ENCODE measurements at regions of chr15 and their contacts with region 1.

Region 1: DNA sequence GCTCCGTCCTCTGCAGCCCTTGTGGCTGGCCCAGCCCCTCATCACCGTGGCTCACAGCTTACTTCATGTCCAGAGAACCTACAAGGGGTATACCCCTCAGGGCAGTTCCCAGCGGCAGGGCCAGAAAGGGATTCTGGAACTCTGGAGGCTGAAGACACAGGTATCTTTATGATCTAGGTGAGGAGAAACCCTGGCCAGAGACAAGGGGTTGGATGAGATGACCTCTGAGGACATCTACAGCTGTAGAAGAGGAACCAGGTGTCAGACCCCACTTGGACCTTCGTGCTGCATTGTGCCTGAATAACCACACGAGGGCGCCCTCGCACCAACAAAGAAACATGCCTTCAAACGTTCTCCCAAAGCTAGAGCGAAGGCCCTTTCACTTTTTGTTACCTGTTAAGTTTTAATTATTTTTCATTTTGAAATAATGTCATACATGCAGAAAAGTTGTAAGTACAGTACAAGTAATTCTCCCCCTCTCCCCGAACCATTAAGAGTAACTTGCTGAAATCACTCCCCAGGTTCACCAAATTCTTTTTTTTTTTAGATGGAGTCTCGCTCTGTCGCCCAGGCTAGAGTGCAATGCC is 118.7 kb upstream of the SMAD3 start:
- DNase-seq: peak; percentile 49
- ATAC-seq: peak; percentile 77
- H3K4me3 ChIP-seq: no peak overlapping the region
- H3K27ac ChIP-seq: no peak overlapping the region
- H3K4me1 ChIP-seq: peaks cover 6 to 26% of the 10 kb centered on the region in 2 experiments
- H3K27me3 ChIP-seq: no peaks in the 10 kb centered on the region
- CTCF ChIP-seq: peak; percentile 81 to 96 (median 87)
- POLR2A ChIP-seq: no peak
- RAD21 ChIP-seq: peak; percentile 98

Region 2: DNA sequence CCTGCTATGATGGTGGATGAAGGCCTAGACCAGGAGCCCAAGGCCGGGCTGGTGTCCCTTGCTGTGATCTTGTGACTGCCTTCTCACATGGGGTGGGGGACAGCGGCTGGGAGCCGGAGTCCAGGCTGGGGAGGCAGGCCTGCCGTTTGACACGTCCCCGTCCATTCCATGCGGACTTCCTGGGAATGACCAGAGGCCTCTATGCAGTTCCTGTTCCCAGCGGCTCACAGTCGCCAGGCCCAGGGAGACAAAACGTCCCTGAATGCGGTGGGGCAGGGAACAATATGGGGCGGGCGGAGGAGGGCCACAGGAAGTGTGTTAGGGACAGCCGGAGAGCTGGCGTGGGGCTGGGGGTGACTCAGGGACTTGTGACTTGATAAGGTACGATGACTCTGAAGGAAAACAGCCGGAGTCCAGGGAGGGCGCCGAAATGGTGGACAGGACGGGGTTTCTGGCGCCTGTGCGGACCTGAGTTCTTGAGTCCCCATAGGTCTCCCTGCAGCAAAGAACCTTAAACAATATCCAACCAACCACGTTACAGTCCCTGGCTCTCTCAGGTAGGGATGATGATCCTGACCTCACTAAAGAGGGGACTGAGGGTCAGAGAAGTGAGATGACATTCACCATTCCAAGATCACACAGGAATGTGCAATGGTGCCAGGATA is 285.1 kb before region 1 on chr15:
- CTCF ChIA-PET with region 1: no interaction called
- POLR2A ChIA-PET with region 1: no interaction called
- RAD21 ChIA-PET with region 1: no interaction called
- intact Hi-C with region 1: no loop called
- DNase-seq: no peak
- ATAC-seq: no peak
- H3K4me3 ChIP-seq: no peak overlapping the region
- H3K27ac ChIP-seq: no peak overlapping the region
- H3K4me1 ChIP-seq: peaks cover 0 to 7% of the 10 kb centered on the region in 2 experiments; a peak in 2 of 4 replicates
- H3K27me3 ChIP-seq: no peaks in the 10 kb centered on the region
- CTCF ChIP-seq: no peak
- POLR2A ChIP-seq: no peak
- RAD21 ChIP-seq: no peak

Region 3: DNA sequence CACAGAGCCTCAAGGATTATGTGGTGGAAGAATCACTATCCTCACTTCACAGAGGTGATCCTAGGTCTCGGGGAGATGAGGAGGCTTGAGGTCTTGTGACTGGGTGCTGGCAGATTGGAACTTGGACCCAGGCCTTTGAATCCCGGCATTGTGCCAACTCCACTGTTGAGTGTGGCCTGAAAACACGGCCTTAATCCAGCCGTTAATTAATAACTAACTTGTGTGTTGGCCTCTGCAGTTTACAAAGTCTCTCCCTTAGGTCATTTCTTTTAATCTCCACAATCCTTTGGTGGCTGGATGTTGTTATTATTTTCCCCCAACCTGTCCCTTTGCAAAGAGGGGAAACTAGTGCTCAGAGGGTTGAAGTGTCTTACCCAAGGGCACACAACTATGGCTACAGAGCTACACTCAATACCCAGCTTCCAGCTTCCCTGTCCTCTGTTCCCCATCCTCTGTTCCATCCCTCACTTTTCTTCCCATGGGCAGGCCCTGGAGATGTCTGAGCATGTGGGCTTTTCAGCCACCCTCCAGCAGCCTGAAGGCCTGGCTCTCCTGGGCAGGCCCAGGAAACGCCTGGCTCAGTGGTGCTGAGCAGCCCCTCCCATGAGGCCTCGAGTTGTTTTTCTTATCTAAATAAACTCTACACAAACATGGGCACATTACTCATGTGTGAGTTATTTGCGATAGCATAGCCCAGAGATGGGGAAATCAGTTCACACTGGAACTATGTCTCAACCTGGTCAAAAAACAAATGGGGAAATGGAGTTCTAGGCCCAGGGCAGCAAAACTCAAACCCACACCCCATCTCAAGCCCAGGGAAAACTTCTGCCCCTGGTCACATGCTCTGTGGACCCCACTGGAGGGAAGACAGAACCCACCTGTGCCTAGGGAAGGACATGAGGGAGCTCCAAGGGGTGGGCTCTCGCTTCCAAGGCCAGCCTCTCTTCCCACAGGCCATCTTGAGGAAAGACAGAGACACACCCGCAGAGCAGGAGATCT is 101.9 kb after region 1 on chr15:
- CTCF ChIA-PET with region 1: no interaction called
- POLR2A ChIA-PET with region 1: no interaction called
- RAD21 ChIA-PET with region 1: no interaction called
- intact Hi-C with region 1: loop called (anchors 5 kb)
- DNase-seq: no peak
- ATAC-seq: peak; percentile 42
- H3K4me3 ChIP-seq: no peak overlapping the region
- H3K27ac ChIP-seq: peak overlapping the region; percentile 71
- H3K4me1 ChIP-seq: peaks cover 50 to 53% of the 10 kb centered on the region in 2 experiments
- H3K27me3 ChIP-seq: no peaks in the 10 kb centered on the region
- CTCF ChIP-seq: no peak
- POLR2A ChIP-seq: no peak
- RAD21 ChIP-seq: no peak

Region 4: DNA sequence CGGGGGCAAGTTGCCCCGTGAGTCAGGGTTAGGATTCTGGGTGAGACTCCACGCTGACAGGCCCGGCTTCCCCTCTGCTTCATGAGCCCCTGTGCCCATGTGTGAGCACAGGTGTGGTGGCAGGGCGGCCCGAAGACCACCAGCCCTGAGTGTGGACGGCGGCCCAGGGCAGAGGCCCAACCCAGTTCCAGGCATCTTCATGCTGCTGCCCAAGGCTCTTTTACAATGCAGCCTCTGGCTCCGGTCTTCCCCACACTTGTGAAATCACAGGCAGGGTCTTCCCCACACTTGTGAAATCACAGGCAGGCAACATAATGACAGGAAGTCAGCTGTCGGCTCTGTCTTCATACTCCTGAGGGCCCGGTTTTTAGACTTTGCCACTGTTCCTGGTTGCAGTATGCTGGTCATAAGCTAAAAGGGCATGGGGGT is 229.0 kb after region 1 on chr15:
- CTCF ChIA-PET with region 1: interaction called, 3 read pairs
- POLR2A ChIA-PET with region 1: no interaction called
- RAD21 ChIA-PET with region 1: no interaction called
- intact Hi-C with region 1: loop called (anchors 10 kb)
- DNase-seq: no peak
- ATAC-seq: no peak
- H3K4me3 ChIP-seq: no peak overlapping the region
- H3K27ac ChIP-seq: peak overlapping the region; percentile 70
- H3K4me1 ChIP-seq: peaks cover 28 to 73% of the 10 kb centered on the region in 2 experiments
- H3K27me3 ChIP-seq: no peaks in the 10 kb centered on the region
- CTCF ChIP-seq: no peak
- POLR2A ChIP-seq: no peak
- RAD21 ChIP-seq: no peak

Region 5: GRCh38 chr15:67303490-67304363 is 357.1 kb after region 1 on chr15:
- CTCF ChIA-PET with region 1: interaction called, 43 read pairs
- POLR2A ChIA-PET with region 1: interaction called, 3 read pairs
- RAD21 ChIA-PET with region 1: interaction called, 10 to 13 read pairs
- intact Hi-C with region 1: loop called (anchors 1 kb)
- DNase-seq: peak; percentile 42
- ATAC-seq: peak; percentile 91
- H3K4me3 ChIP-seq: no peak overlapping the region
- H3K27ac ChIP-seq: no peak overlapping the region
- H3K4me1 ChIP-seq: no peaks in the 10 kb centered on the region
- H3K27me3 ChIP-seq: no peaks in the 10 kb centered on the region
- CTCF ChIP-seq: peak; percentile 46 to 82 (median 65)
- POLR2A ChIP-seq: no peak
- RAD21 ChIP-seq: peak; percentile 87

Region 6: DNA sequence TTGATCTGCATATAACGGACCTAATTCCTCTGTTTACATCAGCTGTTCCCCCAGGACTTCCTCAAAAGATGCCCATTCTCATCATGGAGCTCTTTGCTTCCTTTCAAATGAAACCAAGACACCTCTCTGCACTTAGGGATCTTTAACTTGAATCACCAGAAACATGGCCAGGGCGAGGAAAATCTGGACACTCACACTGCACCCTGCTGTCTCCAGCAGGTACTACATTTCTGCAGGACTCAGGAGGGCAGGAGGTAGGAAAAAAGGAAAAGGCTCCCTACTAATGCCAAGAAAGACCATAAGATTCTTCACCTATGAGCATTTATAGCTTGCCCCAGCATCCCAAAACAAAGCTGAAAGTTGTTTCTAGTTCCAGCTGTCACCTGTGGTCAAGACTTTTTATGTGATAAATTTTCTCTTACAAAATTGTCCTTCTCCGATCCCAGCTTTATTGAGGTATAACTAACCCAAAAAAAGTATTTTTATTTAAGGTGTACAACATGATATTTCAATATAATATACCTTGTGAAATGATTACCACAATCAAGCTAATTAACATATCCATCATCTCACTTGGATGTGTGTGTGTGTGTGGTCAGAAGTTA is 486.9 kb after region 1 on chr15:
- CTCF ChIA-PET with region 1: interaction called, 9 read pairs
- POLR2A ChIA-PET with region 1: no interaction called
- RAD21 ChIA-PET with region 1: no interaction called
- intact Hi-C with region 1: loop called (anchors 5 kb)
- DNase-seq: peak; percentile 27
- ATAC-seq: peak; percentile 94
- H3K4me3 ChIP-seq: no peak overlapping the region
- H3K27ac ChIP-seq: no peak overlapping the region
- H3K4me1 ChIP-seq: peaks cover 0 to 7% of the 10 kb centered on the region in 2 experiments; a peak in 1 of 4 replicates
- H3K27me3 ChIP-seq: no peaks in the 10 kb centered on the region
- CTCF ChIP-seq: peak; percentile 61 to 87 (median 77); a peak in 5 of 6 replicates
- POLR2A ChIP-seq: no peak
- RAD21 ChIP-seq: peak; percentile 72

Region 7: DNA sequence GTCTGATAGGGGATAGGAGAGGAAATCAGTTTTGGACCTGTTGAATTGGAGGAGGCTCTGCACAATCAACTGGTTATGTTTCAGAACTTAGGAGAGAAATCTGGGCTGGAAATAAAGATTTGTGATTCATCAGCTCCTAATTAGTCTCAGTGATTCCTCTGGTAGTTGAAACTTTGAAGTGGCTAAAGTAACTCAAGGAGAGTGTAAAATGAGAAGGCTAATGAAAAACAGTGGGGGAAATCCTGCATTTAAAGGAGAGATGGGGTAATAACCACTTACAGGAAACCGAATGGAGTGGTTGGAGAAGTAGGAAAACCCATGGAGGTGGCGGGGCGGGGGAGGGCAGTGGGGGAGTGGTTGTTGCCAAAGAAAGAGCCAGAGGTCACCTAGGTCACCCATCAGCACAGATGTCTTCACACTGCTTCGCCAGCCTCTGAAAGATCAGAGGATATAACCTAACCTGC is 628.4 kb after region 1 on chr15:
- CTCF ChIA-PET with region 1: no interaction called
- POLR2A ChIA-PET with region 1: no interaction called
- RAD21 ChIA-PET with region 1: no interaction called
- intact Hi-C with region 1: no loop called
- DNase-seq: no peak
- ATAC-seq: no peak
- H3K4me3 ChIP-seq: no peak overlapping the region
- H3K27ac ChIP-seq: no peak overlapping the region
- H3K4me1 ChIP-seq: no peaks in the 10 kb centered on the region
- H3K27me3 ChIP-seq: no peaks in the 10 kb centered on the region
- CTCF ChIP-seq: no peak
- POLR2A ChIP-seq: no peak
- RAD21 ChIP-seq: no peak

Region 8: DNA sequence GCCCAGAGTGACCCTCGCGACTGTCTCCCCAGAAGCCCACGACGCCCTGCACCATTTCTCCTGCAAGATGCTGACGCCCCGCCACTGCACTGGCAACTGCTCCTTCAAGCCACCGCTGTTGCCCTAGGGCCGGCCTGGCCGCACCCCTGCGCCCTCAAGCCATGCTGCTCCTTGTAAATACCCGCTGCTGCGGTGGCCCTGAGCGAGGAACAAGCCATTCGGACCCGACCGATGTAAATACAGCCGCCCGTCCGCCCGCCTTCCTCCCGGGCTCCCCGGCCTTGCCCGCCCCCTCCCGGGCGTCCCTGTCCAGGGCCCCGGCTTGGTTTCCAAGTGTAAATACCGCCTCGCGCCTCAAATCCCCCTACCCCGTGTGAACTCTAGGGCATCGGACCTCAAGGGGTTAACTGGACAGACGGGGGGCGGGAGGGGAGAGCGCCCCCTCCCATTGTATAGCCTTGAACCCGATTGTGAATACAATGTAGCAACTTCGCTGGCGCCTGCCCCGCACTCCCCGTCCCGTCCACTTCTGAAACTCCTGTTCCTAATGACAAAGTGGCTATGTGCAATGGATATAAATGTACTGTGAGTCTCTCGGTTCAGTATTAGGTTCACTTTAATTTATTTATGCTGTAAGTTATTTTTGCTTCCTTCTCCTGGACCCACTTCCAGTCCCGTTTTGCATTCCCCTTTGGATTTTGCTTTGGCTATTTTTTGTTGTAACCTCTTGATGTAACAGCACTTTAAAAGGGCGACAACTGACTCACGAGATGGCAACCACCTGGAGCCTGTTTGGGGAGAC is 887.2 kb after region 1 on chr15:
- CTCF ChIA-PET with region 1: interaction called, 6 read pairs
- POLR2A ChIA-PET with region 1: no interaction called
- RAD21 ChIA-PET with region 1: interaction called in 1 of 2 experiments, 4 read pairs
- intact Hi-C with region 1: loop called (anchors 2 kb)
- DNase-seq: no peak
- ATAC-seq: peak; percentile 59
- H3K4me3 ChIP-seq: no peak overlapping the region
- H3K27ac ChIP-seq: no peak overlapping the region
- H3K4me1 ChIP-seq: peaks cover 0 to under 1% of the 10 kb centered on the region in 2 experiments; a peak in 2 of 4 replicates
- H3K27me3 ChIP-seq: no peaks in the 10 kb centered on the region
- CTCF ChIP-seq: peak; percentile 16 to 30 (median 27); a peak in 4 of 6 replicates
- POLR2A ChIP-seq: no peak
- RAD21 ChIP-seq: peak; percentile 39; the same call in 1 of the 2 replicates